CD8-positive, alpha-beta T cell (primary cell): ENCODE measurements at regions of chr9 and their contacts with region 1.

Region 1: GRCh38 chr9:100129772-100130171 is 30.7 kb downstream of the INVS start:
- DNase-seq: no peak
- ATAC-seq: no peak
- H3K4me3 ChIP-seq: no peak overlapping the region
- H3K4me3 Mint-ChIP-seq: no peak overlapping the region
- H3K27ac ChIP-seq: no peak overlapping the region
- H3K27ac Mint-ChIP-seq: no peak overlapping the region
- H3K4me1 ChIP-seq: no peaks in the 10 kb centered on the region
- H3K4me1 Mint-ChIP-seq: peaks cover 2% of the 10 kb centered on the region
- H3K27me3 ChIP-seq: no peaks in the 10 kb centered on the region
- H3K27me3 Mint-ChIP-seq: no peaks in the 10 kb centered on the region
- CTCF ChIP-seq: no peak

Region 2: GRCh38 chr9:100196215-100196614 is 66.4 kb after region 1 on chr9:
- CTCF ChIA-PET with region 1: no interaction called
- POLR2A ChIA-PET with region 1: no interaction called
- intact Hi-C with region 1: loop called in 1 of 2 experiments (anchors 10 kb)
- DNase-seq: no peak
- ATAC-seq: no peak
- H3K4me3 ChIP-seq: no peak overlapping the region
- H3K4me3 Mint-ChIP-seq: no peak overlapping the region
- H3K27ac ChIP-seq: no peak overlapping the region
- H3K27ac Mint-ChIP-seq: no peak overlapping the region
- H3K4me1 ChIP-seq: no peaks in the 10 kb centered on the region
- H3K4me1 Mint-ChIP-seq: no peaks in the 10 kb centered on the region
- H3K27me3 ChIP-seq: no peaks in the 10 kb centered on the region
- H3K27me3 Mint-ChIP-seq: no peaks in the 10 kb centered on the region
- CTCF ChIP-seq: no peak

Region 3: GRCh38 chr9:100222674-100223073 is 92.9 kb after region 1 on chr9:
- CTCF ChIA-PET with region 1: no interaction called
- POLR2A ChIA-PET with region 1: no interaction called
- intact Hi-C with region 1: no loop called
- DNase-seq: no peak
- ATAC-seq: no peak
- H3K4me3 ChIP-seq: no peak overlapping the region
- H3K4me3 Mint-ChIP-seq: no peak overlapping the region
- H3K27ac ChIP-seq: no peak overlapping the region
- H3K27ac Mint-ChIP-seq: no peak overlapping the region
- H3K4me1 ChIP-seq: no peaks in the 10 kb centered on the region
- H3K4me1 Mint-ChIP-seq: no peaks in the 10 kb centered on the region
- H3K27me3 ChIP-seq: no peaks in the 10 kb centered on the region
- H3K27me3 Mint-ChIP-seq: no peaks in the 10 kb centered on the region
- CTCF ChIP-seq: no peak

Region 4: GRCh38 chr9:100890321-100890720 is 760.5 kb after region 1 on chr9:
- CTCF ChIA-PET with region 1: no interaction called
- POLR2A ChIA-PET with region 1: no interaction called
- intact Hi-C with region 1: no loop called
- DNase-seq: no peak
- ATAC-seq: no peak
- H3K4me3 ChIP-seq: no peak overlapping the region
- H3K4me3 Mint-ChIP-seq: no peak overlapping the region
- H3K27ac ChIP-seq: no peak overlapping the region
- H3K27ac Mint-ChIP-seq: no peak overlapping the region
- H3K4me1 ChIP-seq: no peaks in the 10 kb centered on the region
- H3K4me1 Mint-ChIP-seq: no peaks in the 10 kb centered on the region
- H3K27me3 ChIP-seq: no peaks in the 10 kb centered on the region
- H3K27me3 Mint-ChIP-seq: peaks cover 5% of the 10 kb centered on the region
- CTCF ChIP-seq: no peak